Activated T-helper 2 cell treated with anti-CD3 and anti-CD28 coated beads, Interferon-gamma antibody, Interleukin-2, Interleukin-4, amounts not matched to agents 10 μg/mL and 5 μg/mL and 100 μg/mL, durations not matched to agents 14 hours and 24 hours and 36 hours (primary cell): ENCODE measurements at regions of chr21 and their contacts with region 1.

Region 1: GRCh38 chr21:45439161-45439872 is 34.4 kb downstream of the COL18A1 start:
- DNase-seq: peak; percentile 77
- H3K4me3 Mint-ChIP-seq: no peak overlapping the region
- H3K27ac Mint-ChIP-seq: no peak overlapping the region
- H3K4me1 Mint-ChIP-seq: peaks cover 4% of the 10 kb centered on the region
- H3K27me3 Mint-ChIP-seq: no peaks in the 10 kb centered on the region

Region 2: GRCh38 chr21:45140346-45140940 is 298.9 kb before region 1 on chr21:
- intact Hi-C with region 1: loop called (anchors 1 kb)
- DNase-seq: peak; percentile 61
- H3K4me3 Mint-ChIP-seq: no peak overlapping the region
- H3K27ac Mint-ChIP-seq: no peak overlapping the region
- H3K4me1 Mint-ChIP-seq: peaks cover 8% of the 10 kb centered on the region
- H3K27me3 Mint-ChIP-seq: no peaks in the 10 kb centered on the region